ENCODE measurements at regions of chr4 and their contacts with region 1.

Region 1: DNA sequence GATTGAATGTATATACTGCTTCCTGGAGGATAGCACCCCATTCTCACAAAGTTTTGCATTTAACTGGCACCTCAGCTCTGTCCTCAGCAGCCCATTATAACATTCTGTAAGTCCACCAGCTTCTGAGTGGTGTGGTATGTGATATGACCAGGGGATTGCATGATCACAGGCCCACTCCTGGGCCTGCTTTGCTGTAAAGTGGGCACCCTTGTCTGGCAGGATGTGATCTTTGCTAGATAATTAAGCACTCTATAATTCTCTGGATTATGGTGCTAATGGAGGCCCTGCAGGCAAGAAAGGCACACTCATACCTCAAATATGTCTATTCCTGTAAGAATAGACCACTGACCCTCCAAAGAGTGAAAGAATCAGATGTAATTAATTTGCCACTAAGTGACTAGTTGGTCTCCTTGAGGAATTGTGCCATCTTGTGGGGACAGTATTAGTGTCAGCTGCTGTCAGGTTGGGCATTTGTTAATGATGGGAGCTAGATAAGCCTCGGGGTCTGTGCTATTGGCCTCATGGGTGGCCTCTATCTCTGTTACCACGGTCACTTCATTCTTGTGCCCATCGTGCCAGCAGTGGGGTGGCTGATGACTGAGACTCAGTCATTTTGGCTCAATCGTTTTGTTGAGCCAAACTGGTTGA is 2.2 kb upstream of the CFI start:
- DNase-seq: no peak
- H3K4me3 ChIP-seq: no peak overlapping the region
- H3K27ac ChIP-seq: no peak overlapping the region
- H3K4me1 ChIP-seq: no peaks in the 10 kb centered on the region
- H3K27me3 ChIP-seq: no peaks in the 10 kb centered on the region
- CTCF ChIP-seq: peak; percentile 39

Region 2: DNA sequence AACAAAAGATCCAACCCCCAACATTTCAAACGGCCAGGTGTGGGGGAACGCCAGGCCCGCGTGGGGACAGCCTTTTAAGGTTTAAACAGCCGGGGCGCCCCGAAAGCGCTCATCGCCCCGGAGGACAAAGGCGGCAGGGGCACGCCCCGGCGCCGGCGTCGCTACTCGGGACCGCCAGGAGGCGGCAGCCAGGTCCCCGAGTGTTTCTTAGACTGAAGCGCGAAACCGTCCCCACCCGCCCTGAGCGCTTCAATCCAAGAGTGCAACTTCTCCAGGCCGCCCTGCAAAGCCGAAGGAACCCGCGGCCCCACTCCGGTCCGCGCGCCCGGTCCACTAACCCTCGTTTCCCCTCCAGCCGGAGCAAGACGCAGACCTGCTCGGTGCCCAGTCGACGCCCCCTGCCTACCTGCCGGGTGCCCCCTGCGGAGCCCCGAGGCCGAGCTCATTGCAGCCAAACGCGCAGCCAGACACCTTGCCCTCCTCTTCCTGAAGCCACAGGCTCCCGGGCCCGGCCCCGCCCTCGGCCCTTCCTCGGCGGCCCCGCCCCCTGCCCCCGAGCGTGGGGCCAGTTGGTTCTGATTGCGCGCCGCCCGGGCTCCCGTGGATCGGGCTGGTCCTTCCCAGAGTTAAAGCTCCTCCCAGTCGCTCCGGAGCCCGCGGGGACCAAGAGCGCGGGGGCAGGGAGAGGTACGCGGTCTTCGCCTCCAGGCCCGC is 100.9 kb before region 1 on chr4 and contains the start of gene CASP6:
- intact Hi-C with region 1: loop called (anchors 5 kb)
- DNase-seq: peak; percentile 95
- H3K4me3 ChIP-seq: peak within 1 kb of the TSS; percentile 81
- H3K27ac ChIP-seq: peak within 1 kb of the TSS; percentile 96
- H3K4me1 ChIP-seq: no peaks in the 10 kb centered on the region
- H3K27me3 ChIP-seq: no peaks in the 10 kb centered on the region
- CTCF ChIP-seq: peak; percentile 61
- total RNA-seq, gene CASP6: 110 to 115 TPM

Region 3: DNA sequence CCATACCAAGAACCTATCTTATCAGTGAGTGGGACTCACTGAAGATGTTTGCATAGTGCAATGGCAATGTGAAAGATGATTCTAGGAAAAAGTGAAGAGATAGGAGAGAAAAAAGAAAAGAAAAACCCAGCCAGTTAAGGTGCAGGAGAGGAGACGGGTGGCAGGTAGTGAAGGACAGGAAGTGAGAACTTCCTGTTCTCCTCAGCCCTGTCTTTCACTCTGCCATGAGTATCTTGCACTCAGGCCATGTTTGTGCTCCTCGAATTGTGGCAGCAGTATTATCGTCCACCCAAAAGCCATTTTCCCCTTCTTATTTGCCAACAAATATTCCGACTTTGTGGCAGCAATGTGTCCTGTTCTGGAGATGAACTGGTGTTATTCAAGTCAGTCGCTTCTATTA is 663.4 kb after region 1 on chr4:
- intact Hi-C with region 1: no loop called
- DNase-seq: no peak
- H3K4me3 ChIP-seq: no peak overlapping the region
- H3K27ac ChIP-seq: no peak overlapping the region
- H3K4me1 ChIP-seq: no peaks in the 10 kb centered on the region
- H3K27me3 ChIP-seq: no peaks in the 10 kb centered on the region
- CTCF ChIP-seq: no peak

Measured in colonic mucosa (tissue), 4 donors.